ENCODE measurements at regions of chr10 and their contacts with region 1.

Region 1: GRCh38 chr10:30433730-30434272 is at the start of gene MAP3K8:
- DNase-seq: peak; percentile 90
- ATAC-seq: peak; percentile 77
- H3K4me3 Mint-ChIP-seq: peak within 1 kb of the TSS; percentile 95
- H3K27ac Mint-ChIP-seq: peak within 1 kb of the TSS; percentile 95
- H3K4me1 Mint-ChIP-seq: peaks cover 48% of the 10 kb centered on the region
- H3K27me3 Mint-ChIP-seq: no peaks in the 10 kb centered on the region
- total RNA-seq, gene MAP3K8: 54.5 to 56.8 TPM

Region 2: DNA sequence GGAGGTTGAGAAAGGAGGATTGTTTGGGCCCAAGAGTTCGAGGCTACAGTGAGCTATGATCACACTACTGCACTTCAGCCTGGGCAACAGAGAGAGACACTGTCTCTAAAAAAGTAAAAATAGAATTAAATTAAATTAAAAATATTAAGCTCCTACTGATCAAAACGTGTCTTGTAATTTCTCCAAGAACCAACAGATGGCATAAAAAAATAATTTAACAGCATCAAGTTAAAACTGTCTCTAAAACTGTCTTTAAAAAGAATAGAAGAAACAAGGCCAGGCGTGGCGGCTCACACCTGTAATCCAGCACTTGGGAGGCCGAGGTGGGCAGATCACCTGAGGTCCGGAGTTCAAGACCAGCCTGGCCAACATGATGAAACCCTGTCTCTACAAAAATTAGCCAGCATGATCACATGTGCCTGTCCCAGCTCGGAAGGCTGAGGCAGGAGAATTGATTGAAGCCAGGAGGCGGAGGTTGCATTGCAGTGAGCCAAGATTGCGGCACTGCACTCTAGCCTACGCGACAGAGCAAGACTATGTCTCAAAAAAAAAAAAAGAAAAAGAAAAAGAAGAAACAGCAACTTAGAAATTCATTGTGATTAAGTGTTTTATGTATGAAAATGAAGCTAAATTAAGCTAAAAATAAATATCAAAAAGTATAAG is 109.2 kb before region 1 on chr10:
- CTCF ChIA-PET with region 1: no interaction called
- DNase-seq: no peak
- ATAC-seq: no peak
- H3K4me3 Mint-ChIP-seq: no peak overlapping the region
- H3K27ac Mint-ChIP-seq: no peak overlapping the region
- H3K4me1 Mint-ChIP-seq: no peaks in the 10 kb centered on the region
- H3K27me3 Mint-ChIP-seq: no peaks in the 10 kb centered on the region

Region 3: DNA sequence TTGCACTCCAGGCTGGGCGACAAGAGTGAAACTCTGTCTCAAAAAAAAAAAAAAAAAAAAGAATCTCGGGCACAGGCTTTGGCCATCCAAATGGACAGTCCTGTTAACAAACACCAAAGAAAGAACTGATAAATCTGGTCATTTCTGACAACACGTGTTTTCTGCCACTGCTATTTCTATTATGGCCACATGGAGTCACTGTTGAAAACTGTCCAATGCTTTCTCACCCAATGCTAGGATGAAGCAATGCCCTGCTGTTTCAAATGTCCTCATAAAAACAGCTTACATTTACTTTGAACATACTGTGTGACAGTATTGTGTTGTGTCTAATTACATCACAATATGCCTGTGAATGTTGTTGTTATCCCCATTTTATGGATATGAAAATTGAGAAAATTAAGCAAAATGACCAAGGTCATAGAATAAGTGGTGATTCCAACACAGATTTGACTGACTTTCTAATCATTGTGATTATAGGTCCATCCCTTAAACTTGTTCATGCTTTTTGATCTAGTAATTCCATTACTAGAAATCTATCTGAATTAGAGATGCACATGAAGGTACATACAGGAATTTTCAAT is 19.7 kb before region 1 on chr10:
- CTCF ChIA-PET with region 1: interaction called, 17 read pairs
- DNase-seq: peak; percentile 54
- ATAC-seq: peak; percentile 58
- H3K4me3 Mint-ChIP-seq: no peak overlapping the region
- H3K27ac Mint-ChIP-seq: peak overlapping the region; percentile 36
- H3K4me1 Mint-ChIP-seq: peaks cover 46% of the 10 kb centered on the region
- H3K27me3 Mint-ChIP-seq: no peaks in the 10 kb centered on the region

Region 4: DNA sequence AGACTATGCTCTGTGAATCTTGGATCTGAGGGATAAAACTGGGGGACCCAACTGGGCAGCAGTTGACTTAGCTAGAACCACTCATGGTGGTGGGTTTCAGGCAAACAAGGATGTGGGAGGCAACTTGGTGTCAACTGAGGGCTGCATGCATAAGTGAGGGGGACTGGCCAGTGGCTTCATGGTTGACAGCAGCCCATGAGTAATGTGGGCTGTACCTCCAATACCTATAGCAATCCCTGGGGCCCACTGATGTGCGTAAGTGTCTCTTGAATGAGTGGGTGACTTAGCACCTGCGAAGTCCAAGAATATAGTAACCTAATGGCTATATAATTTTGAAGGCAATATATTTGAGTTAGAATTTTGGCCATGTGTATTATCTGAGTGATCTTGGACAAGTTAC is 13.5 kb before region 1 on chr10:
- CTCF ChIA-PET with region 1: interaction called, 17 read pairs
- DNase-seq: no peak
- ATAC-seq: no peak
- H3K4me3 Mint-ChIP-seq: no peak overlapping the region
- H3K27ac Mint-ChIP-seq: peak overlapping the region; percentile 58
- H3K4me1 Mint-ChIP-seq: peaks cover 61% of the 10 kb centered on the region
- H3K27me3 Mint-ChIP-seq: no peaks in the 10 kb centered on the region

Region 5: GRCh38 chr10:30534465-30535144 is 100.8 kb after region 1 on chr10:
- CTCF ChIA-PET with region 1: interaction called, 119 read pairs
- DNase-seq: peak; percentile 86
- ATAC-seq: peak; percentile 47
- H3K4me3 Mint-ChIP-seq: no peak overlapping the region
- H3K27ac Mint-ChIP-seq: no peak overlapping the region
- H3K4me1 Mint-ChIP-seq: peaks cover 52% of the 10 kb centered on the region
- H3K27me3 Mint-ChIP-seq: no peaks in the 10 kb centered on the region